ENCODE measurements at regions of chr12 and their contacts with region 1.

Region 1: GRCh38 chr12:91877022-91877421 is 268.6 kb downstream of the BTG1 start:
- DNase-seq: peak; percentile 81
- H3K4me3 Mint-ChIP-seq: peak overlapping the region; percentile 66
- H3K27ac Mint-ChIP-seq: peak overlapping the region; percentile 95
- H3K4me1 Mint-ChIP-seq: peaks cover 66% of the 10 kb centered on the region
- H3K27me3 Mint-ChIP-seq: no peaks in the 10 kb centered on the region

Region 2: GRCh38 chr12:91225316-91225715 is 651.7 kb before region 1 on chr12:
- intact Hi-C with region 1: no loop called
- DNase-seq: no peak
- H3K4me3 Mint-ChIP-seq: no peak overlapping the region
- H3K27ac Mint-ChIP-seq: no peak overlapping the region
- H3K4me1 Mint-ChIP-seq: no peaks in the 10 kb centered on the region
- H3K27me3 Mint-ChIP-seq: peaks cover 3% of the 10 kb centered on the region

Region 3: DNA sequence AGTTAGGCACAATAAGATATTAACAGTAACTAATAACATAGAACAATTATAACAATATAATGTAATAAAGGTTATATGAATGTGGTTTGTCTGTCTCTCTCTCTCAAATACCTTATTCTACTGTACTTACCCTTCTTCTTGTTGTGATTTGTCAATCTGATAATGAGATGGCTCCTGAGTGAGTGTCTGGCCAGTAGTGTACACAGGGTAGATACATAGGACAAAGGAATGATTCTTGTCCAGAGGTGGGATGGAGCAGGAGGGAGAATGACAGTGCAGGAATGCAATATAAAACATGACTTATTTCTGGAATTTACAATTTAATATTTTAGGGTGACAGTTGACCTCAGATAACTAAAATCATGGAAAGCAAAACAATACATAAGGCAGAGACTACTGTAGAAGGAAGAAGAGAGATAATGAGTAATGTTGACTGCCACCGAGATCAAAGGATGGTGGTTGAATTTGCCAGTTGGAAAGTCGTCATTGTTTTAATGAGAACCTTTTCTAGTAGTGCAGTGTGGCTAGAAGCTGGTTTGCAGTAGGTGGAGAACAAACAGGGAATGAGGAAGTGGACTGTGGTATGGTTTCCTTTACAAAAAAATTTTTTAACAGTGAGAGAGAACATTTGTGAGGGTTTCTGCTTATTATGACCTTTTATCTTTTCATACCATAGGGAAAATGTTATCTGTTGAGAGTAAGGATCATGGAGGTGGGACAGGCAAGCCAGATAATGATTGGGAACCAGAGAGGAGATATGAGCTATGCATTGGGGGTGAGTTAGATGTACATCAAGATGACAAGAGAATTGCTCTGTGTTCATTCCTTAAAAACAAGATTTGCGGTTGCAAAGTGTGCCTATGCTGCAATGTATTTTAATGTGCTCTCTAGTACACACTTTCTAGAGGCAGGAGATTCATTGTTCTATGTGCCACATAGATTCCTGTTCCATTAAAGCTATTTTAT is 189.7 kb before region 1 on chr12:
- intact Hi-C with region 1: loop called (anchors 1 kb)
- DNase-seq: peak; percentile 2
- H3K4me3 Mint-ChIP-seq: peak overlapping the region; percentile 54
- H3K27ac Mint-ChIP-seq: peak overlapping the region; percentile 83
- H3K4me1 Mint-ChIP-seq: peaks cover 22% of the 10 kb centered on the region
- H3K27me3 Mint-ChIP-seq: no peaks in the 10 kb centered on the region

Region 4: GRCh38 chr12:91811481-91812287 is 65.3 kb before region 1 on chr12:
- intact Hi-C with region 1: loop called (anchors 2 kb)
- DNase-seq: peak; percentile 35
- H3K4me3 Mint-ChIP-seq: no peak overlapping the region
- H3K27ac Mint-ChIP-seq: no peak overlapping the region
- H3K4me1 Mint-ChIP-seq: peaks cover 10% of the 10 kb centered on the region
- H3K27me3 Mint-ChIP-seq: no peaks in the 10 kb centered on the region

Region 5: DNA sequence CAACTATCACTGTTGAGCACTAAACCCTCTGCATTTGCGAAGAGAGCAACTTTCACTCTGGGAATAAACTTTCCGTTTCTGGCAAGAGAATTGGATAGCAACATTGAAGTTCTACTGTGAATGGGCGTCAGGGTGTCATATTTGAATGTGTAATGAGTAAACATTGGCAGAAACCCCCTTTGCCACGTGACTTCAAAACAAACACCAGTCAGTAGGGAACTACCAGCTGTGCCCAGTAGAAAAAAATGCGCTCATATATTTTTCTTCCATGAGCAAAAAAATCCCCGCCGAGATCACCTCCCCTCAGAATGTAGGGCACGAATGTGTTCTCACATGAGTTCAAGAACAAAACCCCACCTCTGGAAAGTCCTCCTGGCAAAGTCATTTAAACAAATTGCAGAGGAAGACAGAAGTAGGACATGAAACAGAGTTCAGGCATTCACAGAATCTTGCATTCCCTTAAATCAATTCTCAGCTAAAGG is 188.0 kb after region 1 on chr12:
- intact Hi-C with region 1: loop called (anchors 1 kb)
- DNase-seq: peak; percentile 31
- H3K4me3 Mint-ChIP-seq: peak overlapping the region; percentile 27
- H3K27ac Mint-ChIP-seq: peak overlapping the region; percentile 69
- H3K4me1 Mint-ChIP-seq: peaks cover 55% of the 10 kb centered on the region
- H3K27me3 Mint-ChIP-seq: no peaks in the 10 kb centered on the region

Region 6: GRCh38 chr12:92208613-92209121 is 331.6 kb after region 1 on chr12:
- intact Hi-C with region 1: loop called (anchors 2 kb)
- DNase-seq: peak; percentile 26
- H3K4me3 Mint-ChIP-seq: peak overlapping the region; percentile 72
- H3K27ac Mint-ChIP-seq: peak overlapping the region; percentile 94
- H3K4me1 Mint-ChIP-seq: peaks cover 46% of the 10 kb centered on the region
- H3K27me3 Mint-ChIP-seq: no peaks in the 10 kb centered on the region

Region 7: DNA sequence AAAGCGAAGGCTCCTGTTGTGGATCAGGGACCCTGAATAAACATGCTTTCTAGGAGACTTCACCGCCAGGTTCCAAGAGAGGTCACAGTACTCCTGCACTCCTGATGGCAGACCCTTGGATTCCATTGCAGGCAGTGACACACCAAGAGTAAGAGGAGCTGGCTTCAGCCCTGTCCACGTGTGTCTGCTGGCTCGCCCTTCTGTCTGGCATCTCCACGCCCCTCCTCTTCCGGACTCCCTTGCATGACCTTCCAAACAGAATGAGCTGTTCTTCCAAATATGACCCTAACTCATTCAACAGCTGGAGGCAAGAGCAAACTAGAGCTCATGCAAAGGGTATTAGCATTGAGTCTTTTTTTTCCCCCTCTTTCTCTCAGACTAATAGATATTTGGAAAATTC is 592.8 kb after region 1 on chr12:
- intact Hi-C with region 1: loop called (anchors 1 kb)
- DNase-seq: no peak
- H3K4me3 Mint-ChIP-seq: no peak overlapping the region
- H3K27ac Mint-ChIP-seq: peak overlapping the region; percentile 81
- H3K4me1 Mint-ChIP-seq: peaks cover 30% of the 10 kb centered on the region
- H3K27me3 Mint-ChIP-seq: no peaks in the 10 kb centered on the region

Region 8: DNA sequence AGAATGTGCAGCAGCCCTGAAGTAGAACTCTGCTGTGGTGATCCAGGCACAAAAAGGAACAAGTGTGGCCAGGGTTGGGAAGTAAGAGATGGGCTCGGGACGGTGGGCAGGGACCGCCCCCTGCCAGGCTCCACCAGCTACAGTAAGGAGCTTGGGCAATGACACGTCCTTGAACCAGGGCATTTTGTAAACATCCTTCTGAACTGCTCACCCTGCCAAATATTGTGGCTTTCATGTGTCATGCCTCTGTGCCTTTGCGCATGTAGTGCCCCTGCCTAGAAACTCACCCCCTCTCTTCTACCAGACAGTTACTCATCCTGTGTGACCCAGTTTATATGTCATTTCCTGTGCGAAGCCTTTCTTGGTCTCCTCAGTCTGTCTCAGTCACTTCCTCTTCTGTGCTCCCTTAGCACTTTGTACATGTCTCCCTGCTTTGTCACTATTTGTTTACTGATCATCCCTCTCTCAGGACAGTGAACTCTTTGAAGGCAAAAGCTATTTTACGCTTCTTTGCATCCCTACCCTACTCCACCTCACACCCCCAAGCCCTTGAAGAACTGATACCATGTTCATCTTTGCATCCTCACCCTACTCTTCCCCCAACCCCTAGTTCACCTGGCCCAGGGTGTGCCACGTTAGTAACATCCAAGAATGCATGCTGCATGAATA is 716.8 kb after region 1 on chr12:
- intact Hi-C with region 1: loop called (anchors 1 kb)
- DNase-seq: peak; percentile 79
- H3K4me3 Mint-ChIP-seq: peak overlapping the region; percentile 72
- H3K27ac Mint-ChIP-seq: peak overlapping the region; percentile 99
- H3K4me1 Mint-ChIP-seq: peaks cover 63% of the 10 kb centered on the region
- H3K27me3 Mint-ChIP-seq: no peaks in the 10 kb centered on the region